ENCODE measurements at regions of chr3 and their contacts with region 1.

Region 1: GRCh38 chr3:189570916-189571315 is 60.3 kb upstream of the TP63 start:
- DNase-seq: no peak
- H3K4me3 Mint-ChIP-seq: no peak overlapping the region
- H3K27ac Mint-ChIP-seq: no peak overlapping the region
- H3K4me1 Mint-ChIP-seq: peaks cover 30% of the 10 kb centered on the region
- H3K27me3 Mint-ChIP-seq: no peaks in the 10 kb centered on the region

Region 2: DNA sequence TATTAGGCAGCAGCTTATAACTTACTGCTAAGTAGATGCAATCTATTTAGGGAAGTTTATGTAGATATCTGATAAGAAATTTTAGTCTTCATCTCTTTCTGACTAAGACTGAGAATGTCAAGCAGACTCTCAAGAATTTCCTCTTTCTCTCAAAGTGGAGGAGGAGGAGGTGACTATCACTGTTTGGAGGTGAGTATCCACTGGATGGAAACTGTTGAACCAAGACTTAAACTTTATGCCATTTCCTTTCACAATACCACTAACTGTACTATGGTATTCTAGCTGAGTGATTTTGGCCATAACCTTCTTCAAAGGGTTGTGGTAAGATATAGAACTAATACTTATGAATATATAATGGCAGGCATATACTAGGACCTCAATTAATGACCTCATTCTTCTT is 334.6 kb before region 1 on chr3:
- intact Hi-C with region 1: loop called (anchors 5 kb)
- DNase-seq: no peak
- H3K4me3 Mint-ChIP-seq: no peak overlapping the region
- H3K27ac Mint-ChIP-seq: peak overlapping the region; percentile 5
- H3K4me1 Mint-ChIP-seq: peaks cover 10% of the 10 kb centered on the region
- H3K27me3 Mint-ChIP-seq: no peaks in the 10 kb centered on the region

Region 3: GRCh38 chr3:189304446-189305351 is 266.2 kb before region 1 on chr3:
- intact Hi-C with region 1: loop called (anchors 5 kb)
- DNase-seq: peak; percentile 65
- H3K4me3 Mint-ChIP-seq: peak overlapping the region; percentile 63
- H3K27ac Mint-ChIP-seq: peak overlapping the region; percentile 91
- H3K4me1 Mint-ChIP-seq: peaks cover 58% of the 10 kb centered on the region
- H3K27me3 Mint-ChIP-seq: no peaks in the 10 kb centered on the region

Region 4: DNA sequence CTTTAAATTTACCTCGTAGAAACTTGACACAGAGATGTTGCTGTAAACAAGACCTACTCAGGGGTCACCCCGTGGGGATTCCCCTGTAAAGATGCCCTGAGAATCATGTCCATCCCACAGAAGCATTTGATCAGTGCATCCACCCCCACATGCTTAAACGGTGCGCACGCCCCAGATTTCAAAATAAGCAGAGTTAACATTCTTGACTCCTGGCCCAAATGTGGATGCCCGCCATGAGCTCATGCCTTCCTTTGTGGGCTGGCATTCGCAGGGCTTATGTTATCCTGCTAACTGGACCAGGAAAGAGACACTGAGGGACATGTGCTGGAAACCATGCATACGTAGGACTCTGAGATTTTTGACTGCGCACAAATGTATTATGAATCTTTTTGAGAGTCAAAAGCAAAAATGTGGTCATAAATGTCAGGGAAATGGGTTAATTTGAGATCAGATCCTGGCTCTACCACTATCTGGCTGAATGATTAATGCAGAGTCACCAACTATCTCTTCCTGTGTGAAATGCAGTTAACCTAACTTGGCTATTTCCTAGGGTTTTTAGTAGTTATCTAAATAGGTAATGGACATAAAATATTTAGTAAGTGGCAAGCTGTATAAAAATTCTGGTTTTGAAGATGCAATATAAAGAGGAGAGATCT is 51.2 kb after region 1 on chr3:
- intact Hi-C with region 1: loop called (anchors 2 kb)
- DNase-seq: no peak
- H3K4me3 Mint-ChIP-seq: no peak overlapping the region
- H3K27ac Mint-ChIP-seq: no peak overlapping the region
- H3K4me1 Mint-ChIP-seq: peaks cover 21% of the 10 kb centered on the region
- H3K27me3 Mint-ChIP-seq: no peaks in the 10 kb centered on the region